ENCODE measurements at regions of chr5 and their contacts with region 1.

Region 1: DNA sequence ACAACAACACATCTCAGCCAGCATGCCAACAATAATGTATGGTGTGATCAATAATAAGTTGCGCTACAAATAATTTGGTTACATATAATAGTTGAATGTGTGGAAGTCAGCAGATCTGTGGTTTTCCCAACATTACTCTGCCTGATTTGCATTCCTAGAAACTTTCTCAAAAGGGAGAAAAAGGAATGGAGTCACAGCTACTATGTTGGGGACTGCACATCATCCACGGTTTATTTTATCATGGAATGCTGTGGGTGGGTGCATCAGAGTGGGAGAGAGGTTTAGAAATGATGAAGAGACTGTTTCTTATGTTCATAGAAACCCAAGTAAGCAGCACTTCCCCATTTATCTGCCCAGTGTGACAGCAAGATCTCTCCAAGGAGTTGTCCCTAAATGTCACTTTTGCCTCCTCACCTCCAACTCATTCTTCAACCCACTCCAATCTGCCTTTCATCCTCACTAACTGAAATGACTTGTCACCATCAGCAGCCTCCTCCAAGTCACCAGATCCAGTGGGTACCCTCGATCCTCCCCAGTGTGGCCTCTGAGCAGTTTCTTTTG is 2.8 kb upstream of the SPOCK1 start:
- DNase-seq: no peak
- ATAC-seq: no peak
- H3K4me3 ChIP-seq: no peak overlapping the region
- H3K27ac ChIP-seq: no peak overlapping the region
- H3K4me1 ChIP-seq: peaks cover 10% of the 10 kb centered on the region
- H3K27me3 ChIP-seq: peaks cover 0 to 10% of the 10 kb centered on the region in 2 donors
- CTCF ChIP-seq: no peak
- POLR2A ChIP-seq: no peak

Region 2: DNA sequence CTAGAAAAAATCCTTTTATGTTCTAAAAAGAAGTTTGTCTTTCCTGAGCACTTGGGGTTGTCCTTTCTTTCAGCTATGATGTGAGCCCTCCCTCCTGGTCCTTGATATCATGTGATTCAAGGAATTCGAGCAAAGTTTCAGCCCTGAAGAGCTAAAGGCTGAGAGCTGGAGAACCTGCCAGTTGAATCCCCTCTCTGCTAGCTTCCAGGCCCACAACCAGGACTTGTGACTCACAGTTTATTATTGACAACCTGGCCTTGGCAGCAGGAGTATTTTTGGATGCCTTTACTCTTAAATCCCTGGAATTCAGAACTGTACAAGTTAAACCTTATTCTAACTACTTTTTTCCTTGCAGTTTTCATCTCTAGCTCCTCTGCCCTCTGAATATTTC is 185.6 kb before region 1 on chr5:
- intact Hi-C with region 1: loop called (anchors 5 kb)
- DNase-seq: peak in 3 of 4 donors; percentile 16 to 62 (median 44)
- ATAC-seq: peak; percentile 41
- H3K4me3 ChIP-seq: no peak overlapping the region
- H3K27ac ChIP-seq: peak overlapping the region in 2 of 4 donors; percentile 37 to 75
- H3K4me1 ChIP-seq: peaks cover 43% of the 10 kb centered on the region
- H3K27me3 ChIP-seq: no peaks in the 10 kb centered on the region
- CTCF ChIP-seq: no peak
- POLR2A ChIP-seq: no peak

Region 3: GRCh38 chr5:137453485-137454080 is 48.3 kb before region 1 on chr5:
- intact Hi-C with region 1: no loop called
- DNase-seq: no peak
- ATAC-seq: no peak
- H3K4me3 ChIP-seq: no peak overlapping the region
- H3K27ac ChIP-seq: no peak overlapping the region
- H3K4me1 ChIP-seq: no peaks in the 10 kb centered on the region
- H3K27me3 ChIP-seq: no peaks in the 10 kb centered on the region
- CTCF ChIP-seq: no peak
- POLR2A ChIP-seq: no peak

Measured in body of pancreas (tissue), 4 donors.